A549 (cell line): ENCODE measurements at regions of chr2 and their contacts with region 1.

Region 1: GRCh38 chr2:86764661-86765307 is 25.9 kb downstream of the CD8A start:
- DNase-seq: peak; percentile 55 to 68
- ATAC-seq: peak; percentile 71 to 90; a peak in 5 of 6 replicates
- H3K4me3 ChIP-seq: no peak overlapping the region
- H3K27ac ChIP-seq: no peak overlapping the region
- H3K4me1 ChIP-seq: no peaks in the 10 kb centered on the region
- CTCF ChIP-seq: peak; percentile 82
- EP300 ChIP-seq: no peak
- POLR2A ChIP-seq: no peak
- RAD21 ChIP-seq: peak; percentile 74 to 79

Region 2: GRCh38 chr2:86072271-86072858 is 692.4 kb before region 1 on chr2:
- CTCF ChIA-PET with region 1: no interaction called
- POLR2A ChIA-PET with region 1: interaction called, 12 read pairs
- DNase-seq: peak in 1 of 2 experiments; percentile 55
- ATAC-seq: peak; percentile 10 to 71; a peak in 4 of 6 replicates
- H3K4me3 ChIP-seq: no peak overlapping the region
- H3K27ac ChIP-seq: peak overlapping the region; percentile 7 to 72; a peak in 4 of 6 replicates
- H3K4me1 ChIP-seq: peaks cover 41% of the 10 kb centered on the region
- CTCF ChIP-seq: no peak
- EP300 ChIP-seq: no peak
- POLR2A ChIP-seq: no peak
- RAD21 ChIP-seq: no peak

Region 3: GRCh38 chr2:86744152-86744551 is 20.6 kb before region 1 on chr2:
- CTCF ChIA-PET with region 1: interaction called, 14 read pairs
- POLR2A ChIA-PET with region 1: no interaction called
- DNase-seq: no peak
- ATAC-seq: no peak; a peak in 1 of 6 replicates
- H3K4me3 ChIP-seq: no peak overlapping the region
- H3K27ac ChIP-seq: no peak overlapping the region
- H3K4me1 ChIP-seq: peaks cover 10% of the 10 kb centered on the region; the same call in 2 of the 3 replicates
- CTCF ChIP-seq: no peak
- EP300 ChIP-seq: no peak
- POLR2A ChIP-seq: no peak
- RAD21 ChIP-seq: no peak

Region 4: GRCh38 chr2:86753606-86754005 is 11.2 kb before region 1 on chr2:
- CTCF ChIA-PET with region 1: interaction called, 36 read pairs
- POLR2A ChIA-PET with region 1: no interaction called
- DNase-seq: no peak
- ATAC-seq: no peak
- H3K4me3 ChIP-seq: no peak overlapping the region
- H3K27ac ChIP-seq: no peak overlapping the region
- H3K4me1 ChIP-seq: no peaks in the 10 kb centered on the region
- CTCF ChIP-seq: no peak
- EP300 ChIP-seq: no peak
- POLR2A ChIP-seq: no peak
- RAD21 ChIP-seq: no peak

Region 5: DNA sequence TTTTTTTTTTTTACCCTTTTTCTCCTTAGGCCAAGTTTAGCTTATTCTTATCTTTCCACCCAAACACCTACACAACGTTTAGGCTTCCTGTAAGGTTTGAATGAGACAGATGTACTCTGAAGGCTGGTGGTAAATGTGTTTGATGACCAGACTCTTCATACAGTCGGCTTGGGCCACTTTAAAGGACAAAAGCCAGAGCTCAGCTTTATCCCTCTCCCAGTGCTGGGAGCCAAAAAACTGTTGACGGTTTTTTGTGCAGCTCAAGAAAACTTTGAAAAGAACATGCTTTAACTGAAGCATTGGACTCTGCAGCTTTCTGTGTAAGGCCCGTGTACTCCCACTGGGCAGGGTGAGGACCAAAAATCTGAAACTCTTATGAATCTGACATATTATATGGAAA is 10.6 kb after region 1 on chr2:
- CTCF ChIA-PET with region 1: interaction called, 18 read pairs
- POLR2A ChIA-PET with region 1: no interaction called
- DNase-seq: no peak
- ATAC-seq: no peak
- H3K4me3 ChIP-seq: no peak overlapping the region
- H3K27ac ChIP-seq: no peak overlapping the region
- H3K4me1 ChIP-seq: no peaks in the 10 kb centered on the region
- CTCF ChIP-seq: no peak
- EP300 ChIP-seq: no peak
- POLR2A ChIP-seq: no peak
- RAD21 ChIP-seq: no peak

Region 6: DNA sequence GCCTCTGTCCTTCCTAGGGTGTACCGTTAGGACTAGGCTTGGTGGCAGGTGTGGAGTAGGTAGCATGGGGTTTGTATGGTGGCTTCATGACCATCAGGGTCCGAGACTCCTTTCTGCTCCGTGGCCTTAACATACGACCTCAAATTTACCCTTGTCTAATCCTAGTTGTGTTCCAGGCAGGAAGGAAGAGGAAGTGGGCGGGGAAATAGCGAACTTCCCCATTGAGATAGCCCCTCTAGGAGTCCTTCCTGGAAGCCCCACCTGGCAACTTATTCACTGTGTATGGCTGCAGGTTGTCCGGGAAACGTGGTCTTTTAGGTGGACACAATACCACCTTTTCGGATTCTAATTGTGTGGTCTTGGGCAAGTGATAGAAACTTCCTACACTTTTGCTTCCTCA is 16.6 kb after region 1 on chr2:
- CTCF ChIA-PET with region 1: interaction called, 18 read pairs
- POLR2A ChIA-PET with region 1: no interaction called
- DNase-seq: no peak
- ATAC-seq: no peak
- H3K4me3 ChIP-seq: no peak overlapping the region
- H3K27ac ChIP-seq: no peak overlapping the region
- H3K4me1 ChIP-seq: no peaks in the 10 kb centered on the region
- CTCF ChIP-seq: no peak
- EP300 ChIP-seq: no peak
- POLR2A ChIP-seq: no peak
- RAD21 ChIP-seq: no peak

Region 7: GRCh38 chr2:86808315-86809161 is 43.8 kb after region 1 on chr2:
- CTCF ChIA-PET with region 1: interaction called, 51 read pairs
- POLR2A ChIA-PET with region 1: no interaction called
- DNase-seq: peak; percentile 93 to 98
- ATAC-seq: peak; percentile 89 to 96
- H3K4me3 ChIP-seq: peak overlapping the region; percentile 65
- H3K27ac ChIP-seq: peak overlapping the region; percentile 52 to 79
- H3K4me1 ChIP-seq: peaks cover 9% of the 10 kb centered on the region; the same call in 2 of the 3 replicates
- CTCF ChIP-seq: peak; percentile 96
- EP300 ChIP-seq: no peak
- POLR2A ChIP-seq: no peak
- RAD21 ChIP-seq: peak; percentile 99 to 100